ENCODE measurements at regions of chr1 and their contacts with region 1.

Region 1: DNA sequence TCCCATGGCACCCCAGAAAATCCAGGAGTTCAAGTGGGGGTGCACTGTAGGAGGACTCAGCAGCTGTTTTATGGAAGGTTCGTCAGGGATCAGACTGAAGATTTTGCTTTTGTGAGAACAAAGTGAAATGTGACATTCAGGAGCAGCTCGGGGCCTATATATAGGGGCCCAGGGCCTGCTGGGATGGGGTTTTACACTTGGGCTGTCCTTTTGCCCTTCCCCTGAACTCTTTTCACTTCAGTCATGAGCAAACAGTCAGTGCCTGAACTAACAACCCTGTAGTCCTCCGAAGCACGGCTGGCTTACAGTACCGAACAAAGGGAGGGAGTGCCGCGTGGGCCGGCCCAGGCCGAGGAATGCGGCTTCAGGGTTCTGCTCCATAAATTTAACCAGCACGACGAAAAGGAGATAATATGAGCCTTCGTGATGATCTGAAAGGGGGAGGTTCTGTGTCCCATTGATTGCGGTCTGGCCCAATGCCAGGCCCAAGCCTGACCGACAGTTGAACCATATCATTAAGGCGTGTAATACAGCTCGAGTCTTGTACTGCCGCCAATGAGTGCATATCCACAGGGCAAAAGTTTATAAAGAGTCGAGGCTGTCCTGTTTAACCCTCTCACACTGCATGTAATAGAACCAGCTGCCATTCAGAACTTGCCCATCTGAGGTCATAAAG is 139.9 kb downstream of the DHRS3 start:
- DNase-seq: peak; percentile 98
- ATAC-seq: peak; percentile 72
- H3K4me3 ChIP-seq: peak overlapping the region; percentile 37; the same call in 1 of the 2 replicates
- H3K27ac ChIP-seq: peak overlapping the region; percentile 96
- H3K4me1 ChIP-seq: peaks cover 74% of the 10 kb centered on the region
- H3K27me3 ChIP-seq: no peaks in the 10 kb centered on the region
- CTCF ChIP-seq: no peak

Region 2: GRCh38 chr1:12336413-12336812 is 141.7 kb before region 1 on chr1:
- CTCF ChIA-PET with region 1: no interaction called
- POLR2A ChIA-PET with region 1: no interaction called
- intact Hi-C with region 1: no loop called
- DNase-seq: no peak
- ATAC-seq: no peak
- H3K4me3 ChIP-seq: no peak overlapping the region
- H3K27ac ChIP-seq: no peak overlapping the region
- H3K4me1 ChIP-seq: no peaks in the 10 kb centered on the region
- H3K27me3 ChIP-seq: no peaks in the 10 kb centered on the region
- CTCF ChIP-seq: no peak

Region 3: DNA sequence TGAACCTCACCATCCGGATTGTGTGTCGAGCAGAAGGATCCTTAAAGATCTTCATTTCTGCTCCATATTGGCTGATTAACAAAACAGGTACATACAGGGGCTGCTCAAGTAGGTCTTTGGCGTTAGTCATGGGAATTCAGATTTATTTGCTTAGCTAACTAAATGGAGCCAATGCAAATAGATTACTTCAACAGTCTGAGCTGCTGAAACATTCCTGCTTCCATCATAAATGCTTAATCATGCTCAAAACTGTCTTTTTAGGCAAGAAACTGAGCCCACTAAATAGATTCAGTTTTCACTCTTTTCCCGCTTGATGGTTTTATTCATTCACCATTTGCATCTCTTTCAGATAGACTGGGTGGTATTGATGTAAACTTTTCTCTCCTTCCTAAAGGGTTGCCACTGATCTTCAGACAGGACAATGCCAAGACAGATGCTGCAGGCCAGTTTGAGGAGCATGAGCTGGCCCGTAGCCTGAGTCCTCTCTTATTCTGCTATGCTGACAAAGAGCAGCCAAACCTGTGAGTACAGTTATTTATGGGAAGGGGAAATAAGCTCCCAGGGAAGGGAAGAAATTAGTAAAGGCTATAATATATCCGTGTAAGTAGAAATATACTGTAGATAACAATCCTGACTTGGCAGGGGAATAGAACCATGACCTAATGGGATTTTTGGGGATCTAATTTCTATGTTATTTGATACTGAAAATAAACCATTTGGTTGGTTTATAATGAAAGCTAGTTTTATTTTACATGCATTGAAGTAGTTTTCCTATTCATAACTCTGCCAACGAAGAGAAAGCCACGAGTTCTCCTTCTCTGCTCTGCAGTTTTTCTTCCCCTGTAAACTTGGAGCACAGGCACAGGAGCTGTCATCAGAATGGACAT is 121.8 kb before region 1 on chr1:
- CTCF ChIA-PET with region 1: no interaction called
- POLR2A ChIA-PET with region 1: no interaction called
- intact Hi-C with region 1: loop called (anchors 5 kb)
- DNase-seq: peak; percentile 88
- ATAC-seq: peak; percentile 96
- H3K4me3 ChIP-seq: peak overlapping the region; percentile 30; the same call in 1 of the 2 replicates
- H3K27ac ChIP-seq: peak overlapping the region; percentile 90
- H3K4me1 ChIP-seq: peaks cover 26% of the 10 kb centered on the region
- H3K27me3 ChIP-seq: no peaks in the 10 kb centered on the region
- CTCF ChIP-seq: no peak

Region 4: GRCh38 chr1:12407050-12407961 is 70.8 kb before region 1 on chr1:
- CTCF ChIA-PET with region 1: interaction called, 4 read pairs
- POLR2A ChIA-PET with region 1: no interaction called
- intact Hi-C with region 1: loop called (anchors 1 kb)
- DNase-seq: peak; percentile 90
- ATAC-seq: peak; percentile 97
- H3K4me3 ChIP-seq: no peak overlapping the region
- H3K27ac ChIP-seq: peak overlapping the region; percentile 60
- H3K4me1 ChIP-seq: peaks cover 31% of the 10 kb centered on the region
- H3K27me3 ChIP-seq: no peaks in the 10 kb centered on the region
- CTCF ChIP-seq: peak; percentile 78

Region 5: GRCh38 chr1:12454406-12455391 is 23.4 kb before region 1 on chr1:
- CTCF ChIA-PET with region 1: no interaction called
- POLR2A ChIA-PET with region 1: no interaction called
- intact Hi-C with region 1: loop called (anchors 2 kb)
- DNase-seq: peak; percentile 57
- ATAC-seq: peak; percentile 39
- H3K4me3 ChIP-seq: no peak overlapping the region
- H3K27ac ChIP-seq: no peak overlapping the region
- H3K4me1 ChIP-seq: peaks cover 50% of the 10 kb centered on the region
- H3K27me3 ChIP-seq: no peaks in the 10 kb centered on the region
- CTCF ChIP-seq: no peak

Region 6: GRCh38 chr1:12465126-12465525 is 12.9 kb before region 1 on chr1:
- CTCF ChIA-PET with region 1: no interaction called
- POLR2A ChIA-PET with region 1: no interaction called
- intact Hi-C with region 1: no loop called
- DNase-seq: no peak
- ATAC-seq: no peak
- H3K4me3 ChIP-seq: no peak overlapping the region
- H3K27ac ChIP-seq: peak overlapping the region; percentile 73
- H3K4me1 ChIP-seq: peaks cover 49% of the 10 kb centered on the region
- H3K27me3 ChIP-seq: no peaks in the 10 kb centered on the region
- CTCF ChIP-seq: no peak

Region 7: GRCh38 chr1:12491656-12492055 is 13.6 kb after region 1 on chr1:
- CTCF ChIA-PET with region 1: no interaction called
- POLR2A ChIA-PET with region 1: no interaction called
- intact Hi-C with region 1: no loop called
- DNase-seq: no peak
- ATAC-seq: no peak
- H3K4me3 ChIP-seq: no peak overlapping the region
- H3K27ac ChIP-seq: no peak overlapping the region
- H3K4me1 ChIP-seq: peaks cover 14% of the 10 kb centered on the region
- H3K27me3 ChIP-seq: no peaks in the 10 kb centered on the region
- CTCF ChIP-seq: no peak

Region 8: GRCh38 chr1:12528021-12528852 is 50.2 kb after region 1 on chr1:
- CTCF ChIA-PET with region 1: no interaction called
- POLR2A ChIA-PET with region 1: interaction called, 3 read pairs
- intact Hi-C with region 1: loop called (anchors 1 kb)
- DNase-seq: peak; percentile 89
- ATAC-seq: peak; percentile 91
- H3K4me3 ChIP-seq: no peak overlapping the region; the same call in 1 of the 2 replicates
- H3K27ac ChIP-seq: peak overlapping the region; percentile 70
- H3K4me1 ChIP-seq: peaks cover 32% of the 10 kb centered on the region
- H3K27me3 ChIP-seq: no peaks in the 10 kb centered on the region
- CTCF ChIP-seq: no peak

Region 9: GRCh38 chr1:12596007-12596821 is 118.1 kb after region 1 on chr1:
- CTCF ChIA-PET with region 1: no interaction called
- POLR2A ChIA-PET with region 1: interaction called, 3 read pairs
- intact Hi-C with region 1: loop called (anchors 5 kb)
- DNase-seq: peak; percentile 92
- ATAC-seq: peak; percentile 72
- H3K4me3 ChIP-seq: peak overlapping the region; percentile 62
- H3K27ac ChIP-seq: peak overlapping the region; percentile 98
- H3K4me1 ChIP-seq: peaks cover 55% of the 10 kb centered on the region
- H3K27me3 ChIP-seq: no peaks in the 10 kb centered on the region
- CTCF ChIP-seq: no peak

Region 10: DNA sequence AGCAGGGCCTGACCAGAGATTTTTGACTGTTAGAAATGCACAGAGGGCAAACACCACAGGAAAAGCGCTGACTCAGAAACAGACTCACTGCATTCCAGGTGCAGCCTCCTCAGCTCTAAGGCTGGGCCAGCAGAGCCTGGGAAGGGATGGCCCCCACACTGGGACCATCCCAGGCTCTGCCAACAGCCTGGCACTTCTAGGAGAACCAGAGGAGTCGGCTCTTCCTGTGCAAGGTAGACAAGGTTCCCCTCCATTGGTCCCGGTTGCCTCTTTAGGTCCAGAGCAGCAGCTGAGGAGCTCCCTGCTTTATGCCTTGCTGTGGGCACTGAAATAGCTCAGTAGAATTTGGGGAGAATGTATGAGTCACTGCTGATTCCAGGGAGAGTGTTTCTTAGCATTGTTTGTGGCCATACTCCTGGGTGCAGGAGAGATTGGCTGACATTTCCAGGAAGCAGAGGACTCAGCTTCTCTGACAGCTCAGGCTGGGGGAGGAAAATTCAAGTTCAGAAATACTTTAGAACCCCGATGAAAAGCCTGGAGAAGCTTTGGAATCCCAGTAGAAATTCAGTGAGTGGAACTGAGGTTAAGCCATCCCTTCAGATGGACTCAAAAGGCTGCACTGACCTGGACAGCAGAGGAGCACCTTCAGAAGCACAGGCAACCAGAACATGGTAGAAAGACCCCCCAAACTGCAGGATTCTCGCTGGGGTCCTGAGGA is 332.8 kb after region 1 on chr1:
- CTCF ChIA-PET with region 1: no interaction called
- POLR2A ChIA-PET with region 1: no interaction called
- intact Hi-C with region 1: no loop called
- DNase-seq: peak; percentile 6
- ATAC-seq: no peak
- H3K4me3 ChIP-seq: no peak overlapping the region
- H3K27ac ChIP-seq: no peak overlapping the region
- H3K4me1 ChIP-seq: no peaks in the 10 kb centered on the region
- H3K27me3 ChIP-seq: peaks cover 24% of the 10 kb centered on the region
- CTCF ChIP-seq: no peak